Right ventricle myocardium inferior (tissue), 1 donor: ENCODE measurements at regions of chr22 and their contacts with region 1.

Region 1: DNA sequence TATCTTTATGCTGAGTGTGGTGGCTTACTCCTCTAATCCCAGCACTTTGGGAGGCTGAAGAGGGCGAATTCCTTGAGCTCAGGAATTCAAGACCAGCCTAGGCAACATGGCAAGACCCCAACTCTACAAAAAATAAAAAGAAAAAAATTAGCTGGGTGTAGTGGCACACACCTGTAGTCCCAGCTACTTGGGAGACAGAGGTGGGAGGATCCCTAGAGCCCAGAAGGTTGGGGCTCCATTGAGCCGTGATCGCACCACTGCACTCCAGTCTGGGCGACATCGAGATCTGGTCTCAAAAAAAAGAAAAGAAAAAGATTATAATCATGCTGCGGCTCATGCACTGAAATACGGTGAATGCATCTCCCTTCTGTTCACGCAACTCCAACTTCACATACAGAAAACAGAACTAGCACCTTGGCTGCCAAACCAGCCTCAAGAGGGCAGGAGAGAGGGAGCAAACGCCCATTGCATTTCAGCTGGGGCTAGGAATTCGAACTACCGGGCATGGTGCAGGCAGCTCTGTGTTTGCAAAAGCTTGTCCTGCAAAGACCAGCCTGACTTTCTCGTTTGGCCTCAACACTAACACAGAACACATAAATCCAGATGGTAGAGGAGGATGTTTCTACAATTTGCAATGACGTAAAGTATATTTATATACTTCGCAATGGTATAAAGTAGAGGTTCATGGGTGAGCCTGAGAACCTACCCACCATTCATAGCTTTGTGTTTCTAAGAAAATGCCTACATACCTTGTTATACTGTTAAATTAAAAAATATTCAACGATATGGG is 6.3 kb upstream of the SYNGR1 start:
- DNase-seq: peak; percentile 68
- ATAC-seq: peak; percentile 68

Region 2: DNA sequence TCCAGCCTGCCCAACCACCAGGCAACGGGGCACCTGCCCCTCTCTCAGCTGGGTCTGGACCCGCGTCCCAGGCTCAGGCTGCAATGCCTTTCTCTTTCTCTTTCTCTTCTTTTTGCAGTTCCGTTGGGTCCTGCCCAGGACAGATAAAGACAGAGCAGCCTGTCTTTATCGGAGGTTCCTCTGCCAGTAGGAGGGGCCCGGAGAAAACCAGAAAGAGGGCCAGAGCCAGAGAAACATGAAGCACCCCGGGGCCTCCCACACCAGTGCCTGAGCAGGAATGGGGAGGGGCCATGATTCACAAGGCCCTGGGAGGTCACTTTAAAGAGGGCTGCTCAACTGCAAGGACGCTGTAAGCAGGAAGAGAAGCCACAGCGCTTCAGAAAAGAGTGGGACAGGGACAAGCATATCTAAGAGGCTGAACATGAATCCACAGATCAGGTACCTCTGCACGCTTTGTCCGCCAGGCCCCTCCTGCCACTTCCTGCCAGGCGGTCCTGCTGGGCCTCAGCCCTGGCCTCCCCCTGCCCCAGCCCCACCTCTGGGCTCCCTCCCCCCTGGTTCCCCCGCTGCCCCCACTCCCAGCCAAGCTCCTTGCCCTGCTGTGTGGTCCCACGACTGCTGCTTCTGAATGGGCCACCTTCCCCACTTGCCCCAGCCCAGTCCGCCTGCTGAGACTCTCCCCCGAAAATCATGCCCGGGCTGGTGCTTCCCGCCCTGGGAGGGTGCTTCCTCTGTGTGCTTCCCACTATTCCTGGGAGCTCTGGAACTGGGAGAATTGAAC is 329.3 kb before region 1 on chr22 and contains the start of gene APOBEC3C:
- intact Hi-C with region 1: no loop called
- DNase-seq: peak; percentile 87
- ATAC-seq: peak; percentile 98
- total RNA-seq, gene APOBEC3C: 27.9 TPM

Region 3: DNA sequence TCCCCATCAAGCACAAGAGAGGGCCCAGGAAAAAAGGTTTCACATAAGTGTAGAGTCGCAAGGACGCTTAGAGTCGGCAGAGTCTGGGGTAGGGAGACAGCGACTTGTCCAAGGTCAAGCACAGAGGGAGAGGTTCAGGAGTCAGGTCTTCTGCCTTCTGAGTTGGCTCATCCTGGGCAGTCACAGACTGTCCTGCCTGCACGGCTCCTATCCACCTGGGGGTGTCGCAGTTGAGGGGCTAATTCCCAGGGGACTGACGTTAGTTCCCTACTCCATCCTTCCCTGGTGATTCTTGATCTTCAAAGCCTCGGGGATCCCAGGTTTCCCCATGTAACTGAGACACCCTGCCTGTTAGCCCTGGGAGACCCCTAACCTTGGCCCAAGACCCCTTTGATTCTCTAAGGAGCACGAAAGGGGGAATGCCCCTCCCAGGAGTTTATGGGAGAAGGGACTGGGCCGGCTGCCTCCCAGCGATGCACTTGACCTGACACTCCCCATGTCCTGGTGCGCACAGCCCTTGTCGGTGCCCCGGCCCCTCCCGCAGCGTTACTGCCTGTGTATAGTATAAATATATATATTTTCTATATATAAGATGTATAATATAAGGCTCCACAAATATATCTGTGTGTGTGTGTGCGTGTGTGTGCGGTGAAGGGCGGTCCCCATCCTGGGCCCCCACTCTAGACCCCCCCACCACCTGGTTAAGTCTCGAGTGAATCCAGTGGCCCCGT is 41.5 kb after region 1 on chr22:
- intact Hi-C with region 1: no loop called
- DNase-seq: no peak
- ATAC-seq: no peak

Region 4: DNA sequence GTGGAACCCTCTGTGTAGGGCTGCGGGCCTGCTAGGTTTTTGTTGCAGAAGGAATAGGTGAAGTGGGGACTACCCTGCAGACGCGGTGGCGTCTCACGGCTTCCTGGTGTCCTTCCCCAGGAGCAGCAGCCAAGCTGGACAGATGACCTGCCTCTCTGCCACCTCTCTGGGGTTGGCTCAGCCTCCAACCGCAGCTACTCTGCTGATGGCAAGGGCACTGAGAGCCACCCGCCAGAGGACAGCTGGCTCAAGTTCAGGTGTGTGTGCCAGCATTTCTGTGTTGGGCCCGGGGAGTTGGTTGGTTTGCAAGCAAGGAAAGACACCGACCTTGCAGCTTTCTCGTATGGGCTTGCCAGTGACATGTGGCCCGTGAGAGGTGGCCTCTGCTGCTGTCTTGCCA is 71.4 kb after region 1 on chr22:
- intact Hi-C with region 1: loop called (anchors 10 kb)
- DNase-seq: no peak
- ATAC-seq: peak; percentile 83

Region 5: DNA sequence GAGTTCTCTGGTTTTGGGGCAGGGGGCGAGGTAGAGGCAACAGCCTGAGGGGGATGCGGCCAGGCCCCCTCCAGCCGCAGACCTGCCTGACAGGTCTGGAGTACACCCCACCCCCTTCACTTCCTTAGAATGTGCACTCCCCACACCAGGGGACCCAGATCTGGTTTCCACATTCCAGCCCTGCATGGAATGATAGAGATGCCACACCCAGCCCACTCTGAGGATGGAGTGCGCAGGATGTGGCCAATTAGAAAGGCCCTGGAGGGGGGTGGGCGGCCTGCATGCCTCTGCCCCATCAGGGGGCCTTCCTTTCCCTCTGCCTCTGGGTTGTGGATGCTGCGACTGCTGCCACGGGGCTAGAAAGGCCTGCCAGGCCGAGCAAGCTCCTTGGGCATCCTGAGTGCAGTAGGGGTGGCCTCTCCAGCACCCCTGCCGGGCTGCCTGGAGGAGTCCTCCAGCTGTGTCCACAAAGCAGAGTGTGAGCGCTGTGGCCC is 85.2 kb after region 1 on chr22:
- intact Hi-C with region 1: no loop called
- DNase-seq: no peak
- ATAC-seq: no peak